ENCODE measurements at regions of chr20 and their contacts with region 1.

Region 1: GRCh38 chr20:36861875-36862801 is 13.8 kb upstream of the TLDC2 start:
- DNase-seq: peak; percentile 99
- H3K4me3 ChIP-seq: peak overlapping the region; percentile 46 to 60 (median 58)
- H3K27ac ChIP-seq: peak overlapping the region; percentile 70
- H3K4me1 ChIP-seq: peaks cover 47% of the 10 kb centered on the region
- H3K27me3 ChIP-seq: no peaks in the 10 kb centered on the region
- CTCF ChIP-seq: no peak

Region 2: DNA sequence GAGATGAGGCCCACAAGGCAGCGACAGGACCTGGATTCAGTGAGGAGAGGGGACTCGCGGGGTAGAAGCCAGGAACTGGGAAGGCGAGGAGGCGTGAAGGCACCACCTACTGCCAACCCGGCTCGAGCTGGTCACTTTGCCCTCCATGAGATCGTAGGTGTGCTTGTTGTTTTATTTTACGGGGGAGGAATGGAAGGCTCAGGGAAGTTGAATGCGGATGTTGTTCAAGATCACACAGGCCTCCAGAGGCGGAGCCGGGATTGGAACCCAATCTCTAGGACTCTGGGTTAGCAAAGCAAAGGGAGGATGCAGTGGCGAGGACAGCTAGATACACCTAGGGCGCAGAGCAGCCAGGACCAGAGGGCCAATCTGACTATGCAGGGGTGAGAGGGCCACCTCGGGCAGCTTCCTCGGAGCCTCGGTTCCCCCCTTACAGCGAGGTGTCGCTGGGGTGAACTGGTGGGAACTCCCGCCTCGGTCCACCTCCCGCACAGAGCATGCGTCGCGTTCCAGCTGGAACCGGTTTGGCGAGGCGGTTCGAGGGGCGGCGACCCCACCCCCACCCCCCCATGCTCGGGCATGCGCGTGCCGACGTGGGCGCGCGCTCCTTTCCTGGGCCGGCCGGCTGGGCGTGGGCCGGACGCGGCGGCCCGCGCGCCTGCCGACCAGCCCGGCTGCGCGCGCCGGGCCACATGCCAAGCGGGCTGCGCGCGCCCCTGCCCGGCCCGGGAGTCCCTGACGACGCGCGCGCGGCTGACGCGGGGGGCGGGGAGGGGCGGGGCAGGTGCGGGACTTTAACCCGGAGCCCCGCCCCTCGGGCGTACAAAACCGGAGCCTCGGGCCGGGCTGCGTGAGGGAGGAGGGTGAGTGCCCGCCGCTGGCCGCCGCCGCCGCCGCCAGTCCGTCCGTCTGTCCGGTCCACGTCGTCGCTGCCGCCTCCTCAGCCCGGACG is 401.2 kb before region 1 on chr20:
- CTCF ChIA-PET with region 1: no interaction called
- dilution Hi-C with region 1: no loop called
- in situ Hi-C with region 1: no loop called
- intact Hi-C with region 1: loop called (anchors 5 kb)
- DNase-seq: peak; percentile 87
- H3K4me3 ChIP-seq: peak overlapping the region; percentile 2 to 77 (median 50)
- H3K27ac ChIP-seq: peak overlapping the region; percentile 59
- H3K4me1 ChIP-seq: peaks cover 34% of the 10 kb centered on the region
- H3K27me3 ChIP-seq: no peaks in the 10 kb centered on the region
- CTCF ChIP-seq: no peak

Region 3: DNA sequence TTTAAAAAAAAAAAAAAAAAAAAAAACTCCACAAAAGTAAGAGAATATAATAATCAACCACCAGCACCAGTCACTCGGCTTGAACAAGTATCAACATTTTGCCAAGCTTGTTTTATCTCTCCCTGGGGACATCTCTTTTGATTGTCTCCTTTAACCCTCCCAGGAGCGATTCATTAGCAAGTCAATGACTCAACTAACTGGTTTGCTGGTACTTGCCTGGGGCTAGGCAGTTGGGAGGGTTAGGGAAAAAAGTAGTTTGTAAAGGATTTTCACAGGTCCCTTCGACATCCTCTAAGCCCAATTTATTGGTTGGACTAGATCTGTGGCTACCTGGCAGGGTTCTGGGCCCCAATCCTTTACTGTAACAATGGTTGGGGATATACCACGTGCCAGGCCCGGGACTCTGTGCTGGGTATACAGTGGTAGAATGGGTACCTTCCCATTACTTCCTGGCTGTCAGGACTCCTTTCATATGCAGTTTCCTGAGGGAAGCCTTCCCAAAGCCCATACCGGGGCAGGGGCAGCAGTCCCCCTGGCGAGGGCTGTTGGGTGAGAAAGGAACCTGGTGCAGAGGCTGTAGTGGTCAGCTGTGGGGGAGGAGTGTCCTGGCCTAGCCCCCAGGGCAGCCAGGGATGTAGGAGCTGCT is 276.6 kb before region 1 on chr20:
- CTCF ChIA-PET with region 1: no interaction called
- dilution Hi-C with region 1: loop called (anchors 5 kb)
- in situ Hi-C with region 1: no loop called
- intact Hi-C with region 1: no loop called
- DNase-seq: peak; percentile 95
- H3K4me3 ChIP-seq: no peak overlapping the region
- H3K27ac ChIP-seq: peak overlapping the region; percentile 1
- H3K4me1 ChIP-seq: peaks cover 21% of the 10 kb centered on the region
- H3K27me3 ChIP-seq: no peaks in the 10 kb centered on the region
- CTCF ChIP-seq: no peak

Region 4: DNA sequence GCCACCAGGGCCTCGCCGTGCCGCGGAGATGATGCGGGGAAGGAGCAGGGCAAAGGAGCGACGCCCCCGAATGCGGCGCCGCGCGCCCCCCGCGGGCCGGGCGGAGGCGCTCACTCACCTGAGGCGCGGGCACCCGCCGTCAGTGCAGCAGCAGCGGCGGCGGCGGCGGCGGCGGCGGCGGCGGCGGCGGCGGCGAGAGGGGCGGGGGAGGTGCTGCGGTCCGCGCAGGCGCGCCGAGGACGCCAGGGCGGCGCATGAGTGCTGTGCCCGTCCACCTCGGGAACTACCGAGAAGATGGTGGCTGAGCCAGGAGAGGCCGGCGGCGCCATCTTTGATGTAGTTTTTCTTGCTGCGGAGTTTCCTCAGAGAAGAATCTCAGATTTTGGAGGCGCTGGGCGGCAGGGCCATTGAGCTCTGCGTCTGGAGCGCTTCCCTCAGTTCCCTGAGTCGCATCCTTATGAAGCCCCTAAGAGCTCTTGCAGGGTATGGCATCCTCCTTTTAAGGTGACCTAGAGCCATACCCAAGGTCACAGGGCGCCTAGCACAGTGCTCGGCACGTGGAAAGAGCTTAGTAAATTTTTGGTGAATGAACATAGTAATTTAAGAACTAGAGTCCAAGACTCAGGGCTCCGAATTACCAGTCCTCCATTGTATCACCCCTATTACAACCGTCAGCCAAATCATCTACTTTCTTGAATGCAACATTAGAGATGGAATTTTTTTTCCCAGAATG is 116.0 kb before region 1 on chr20 and contains the start of gene NDRG3:
- CTCF ChIA-PET with region 1: no interaction called
- dilution Hi-C with region 1: no loop called
- in situ Hi-C with region 1: no loop called
- intact Hi-C with region 1: loop called (anchors 2 kb)
- DNase-seq: peak; percentile 86
- H3K4me3 ChIP-seq: peak within 1 kb of the TSS; percentile 83 to 89 (median 83)
- H3K27ac ChIP-seq: peak within 1 kb of the TSS; percentile 17
- H3K4me1 ChIP-seq: peaks cover 11% of the 10 kb centered on the region
- H3K27me3 ChIP-seq: no peaks in the 10 kb centered on the region
- CTCF ChIP-seq: no peak
- total RNA-seq, gene NDRG3: 20.8 to 25.9 TPM

Region 5: GRCh38 chr20:36792422-36792821 is 69.7 kb before region 1 on chr20:
- CTCF ChIA-PET with region 1: interaction called, 9 read pairs
- dilution Hi-C with region 1: no loop called
- in situ Hi-C with region 1: no loop called
- intact Hi-C with region 1: loop called (anchors 1 kb)
- DNase-seq: peak; percentile 31
- H3K4me3 ChIP-seq: no peak overlapping the region
- H3K27ac ChIP-seq: no peak overlapping the region
- H3K4me1 ChIP-seq: no peaks in the 10 kb centered on the region
- H3K27me3 ChIP-seq: no peaks in the 10 kb centered on the region
- CTCF ChIP-seq: peak; percentile 23 to 53

Region 6: DNA sequence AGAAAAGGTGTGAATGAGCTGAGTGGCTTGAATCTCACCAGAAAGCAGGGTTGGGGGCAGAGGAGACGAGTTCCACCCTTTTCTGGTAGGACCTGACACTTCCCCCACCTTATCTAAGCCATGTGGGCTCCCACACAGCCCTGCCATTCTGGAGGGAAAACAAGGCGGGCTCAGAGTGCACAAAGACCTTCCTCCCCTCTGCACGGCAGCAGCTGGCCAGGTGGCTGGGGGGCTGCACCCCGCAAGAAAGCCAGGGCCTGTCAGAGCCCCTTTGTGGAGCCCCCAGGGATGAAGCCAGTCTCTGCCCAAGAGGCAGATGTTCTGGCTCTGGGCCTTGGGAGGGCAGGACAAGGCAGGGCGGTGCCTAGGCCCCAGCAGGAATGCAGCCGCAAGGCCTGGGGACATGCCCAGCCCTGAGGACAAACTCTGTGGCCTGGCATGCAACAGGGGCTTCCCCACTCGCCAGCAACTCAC is 40.1 kb before region 1 on chr20:
- CTCF ChIA-PET with region 1: no interaction called
- dilution Hi-C with region 1: loop called (anchors 5 kb)
- in situ Hi-C with region 1: no loop called
- intact Hi-C with region 1: loop called (anchors 5 kb)
- DNase-seq: peak; percentile 61
- H3K4me3 ChIP-seq: no peak overlapping the region
- H3K27ac ChIP-seq: peak overlapping the region; percentile 34
- H3K4me1 ChIP-seq: peaks cover 25% of the 10 kb centered on the region
- H3K27me3 ChIP-seq: no peaks in the 10 kb centered on the region
- CTCF ChIP-seq: no peak

Region 7: DNA sequence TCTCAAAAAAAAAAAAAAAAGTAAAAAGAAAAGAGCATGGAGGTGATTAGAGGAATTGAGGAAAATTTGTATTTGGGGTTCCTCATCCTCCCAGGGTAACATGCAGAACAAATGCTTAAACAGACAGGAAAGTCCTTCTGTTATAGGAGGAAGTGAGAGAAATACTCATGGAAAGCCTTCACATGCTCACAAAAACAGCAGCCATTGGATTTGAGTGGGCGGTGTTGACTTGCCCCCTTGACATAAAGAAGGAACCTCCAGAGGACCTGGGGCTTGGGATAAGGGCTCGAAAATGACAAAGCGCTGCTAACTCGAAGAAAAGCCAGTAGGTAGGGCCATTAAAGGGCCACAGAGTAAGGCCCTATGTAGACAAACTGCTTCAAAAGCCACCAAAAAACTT is 106.9 kb after region 1 on chr20:
- CTCF ChIA-PET with region 1: no interaction called
- dilution Hi-C with region 1: no loop called
- in situ Hi-C with region 1: no loop called
- intact Hi-C with region 1: no loop called
- DNase-seq: no peak
- H3K4me3 ChIP-seq: no peak overlapping the region
- H3K27ac ChIP-seq: no peak overlapping the region
- H3K4me1 ChIP-seq: no peaks in the 10 kb centered on the region
- H3K27me3 ChIP-seq: no peaks in the 10 kb centered on the region
- CTCF ChIP-seq: no peak

Region 8: GRCh38 chr20:36998652-36999051 is 136.5 kb after region 1 on chr20:
- CTCF ChIA-PET with region 1: no interaction called
- dilution Hi-C with region 1: no loop called
- in situ Hi-C with region 1: no loop called
- intact Hi-C with region 1: no loop called
- DNase-seq: no peak
- H3K4me3 ChIP-seq: no peak overlapping the region
- H3K27ac ChIP-seq: no peak overlapping the region
- H3K4me1 ChIP-seq: no peaks in the 10 kb centered on the region
- H3K27me3 ChIP-seq: no peaks in the 10 kb centered on the region
- CTCF ChIP-seq: no peak